Heart right ventricle (tissue), 16 donors: ENCODE measurements at regions of chr3 and their contacts with region 1.

Region 1: DNA sequence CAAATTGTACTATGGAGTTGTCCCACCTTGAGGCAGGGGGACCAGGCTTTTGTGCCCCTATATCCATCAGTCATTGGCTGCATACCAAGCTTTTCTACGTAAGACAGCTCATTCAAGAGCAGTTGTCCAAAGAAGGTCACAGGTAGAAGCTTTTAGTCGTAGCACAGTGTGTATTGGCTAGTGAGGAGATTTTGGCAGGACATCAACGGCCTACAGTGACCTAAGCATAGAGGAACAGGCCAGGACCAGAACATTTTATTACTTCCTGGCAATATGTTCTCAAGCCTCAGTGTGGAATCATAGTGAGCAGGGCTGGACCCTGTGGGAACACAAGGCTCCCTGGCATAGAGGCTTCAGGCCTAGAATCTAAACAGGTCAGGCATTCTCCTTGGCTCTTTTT is 105.4 kb upstream of the ANKRD28 start:
- DNase-seq: peak in 1 of 2 donors; percentile 54
- ATAC-seq: peak; percentile 81 to 96 (median 92)
- H3K4me3 ChIP-seq: no peak overlapping the region
- H3K27ac ChIP-seq: peak overlapping the region; percentile 50 to 92 (median 84)
- H3K4me1 ChIP-seq: peaks cover 0 to 21% (median 14%) of the 10 kb centered on the region in 9 donors
- H3K27me3 ChIP-seq: no peaks in the 10 kb centered on the region
- CTCF ChIP-seq: no peak

Region 2: DNA sequence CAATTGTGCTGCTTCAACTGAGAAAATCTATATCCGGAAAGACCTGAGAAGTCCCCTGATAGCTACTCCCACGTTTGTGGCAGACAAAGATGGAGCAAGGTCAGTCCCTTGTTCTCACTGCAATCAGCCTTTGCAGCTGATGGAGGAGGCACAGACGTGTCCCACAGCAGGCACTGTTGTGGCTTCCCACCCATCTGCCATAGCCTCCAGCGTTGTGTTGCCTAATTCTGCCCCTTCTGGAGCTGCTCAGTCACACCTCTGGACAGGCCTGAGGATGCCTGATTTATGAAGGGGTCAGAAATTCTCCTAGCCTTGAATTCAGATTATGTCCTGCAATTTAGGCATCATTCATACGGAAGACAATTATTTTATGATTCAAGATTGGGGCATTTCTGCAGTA is 879.9 kb before region 1 on chr3:
- intact Hi-C with region 1: no loop called
- DNase-seq: no peak
- ATAC-seq: peak in 2 of 8 donors; percentile 42 to 54
- H3K4me3 ChIP-seq: no peak overlapping the region
- H3K27ac ChIP-seq: no peak overlapping the region
- H3K4me1 ChIP-seq: no peaks in the 10 kb centered on the region
- H3K27me3 ChIP-seq: no peaks in the 10 kb centered on the region
- CTCF ChIP-seq: no peak

Region 3: DNA sequence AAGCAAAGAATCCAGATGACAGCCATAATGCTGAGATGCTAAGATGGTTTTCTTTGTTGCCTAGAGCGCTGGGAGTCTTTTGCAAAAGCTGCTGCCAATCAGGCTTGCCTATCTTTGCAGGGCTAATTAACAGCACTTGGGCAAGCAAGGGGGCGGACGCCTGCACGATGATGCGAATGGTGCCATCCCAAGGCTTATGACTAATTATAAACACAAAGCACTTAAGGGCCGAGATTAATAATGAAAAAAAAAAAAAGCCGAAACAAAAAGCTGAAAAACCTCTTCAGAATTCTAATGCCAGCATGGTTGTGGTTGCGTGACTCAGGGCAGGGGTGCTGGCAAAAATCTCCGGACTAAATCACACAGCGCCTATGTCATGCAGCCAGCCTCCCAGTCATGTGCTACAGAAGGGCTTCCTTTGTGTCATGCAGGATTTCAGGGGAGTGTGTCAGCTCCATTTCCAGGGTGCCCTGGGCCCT is 79.5 kb after region 1 on chr3:
- intact Hi-C with region 1: loop called in 1 of 10 experiments (anchors 5 kb)
- DNase-seq: peak in 1 of 2 donors; percentile 24
- ATAC-seq: peak; percentile 25 to 93 (median 90)
- H3K4me3 ChIP-seq: peak overlapping the region in 6 of 10 donors; percentile 14 to 38 (median 24)
- H3K27ac ChIP-seq: peak overlapping the region in 8 of 10 donors; percentile 3 to 71 (median 36)
- H3K4me1 ChIP-seq: peaks cover 0 to 6% (median 0%) of the 10 kb centered on the region in 9 donors
- H3K27me3 ChIP-seq: no peaks in the 10 kb centered on the region
- CTCF ChIP-seq: no peak